Activated CD4-positive, alpha-beta T cell treated with anti-CD3 and anti-CD28 coated beads, Interleukin-2, amount 10 ng/mL, durations not matched to agents 24 days and 14 days (primary cell): ENCODE measurements at regions of chr6 and their contacts with region 1.

Region 1: DNA sequence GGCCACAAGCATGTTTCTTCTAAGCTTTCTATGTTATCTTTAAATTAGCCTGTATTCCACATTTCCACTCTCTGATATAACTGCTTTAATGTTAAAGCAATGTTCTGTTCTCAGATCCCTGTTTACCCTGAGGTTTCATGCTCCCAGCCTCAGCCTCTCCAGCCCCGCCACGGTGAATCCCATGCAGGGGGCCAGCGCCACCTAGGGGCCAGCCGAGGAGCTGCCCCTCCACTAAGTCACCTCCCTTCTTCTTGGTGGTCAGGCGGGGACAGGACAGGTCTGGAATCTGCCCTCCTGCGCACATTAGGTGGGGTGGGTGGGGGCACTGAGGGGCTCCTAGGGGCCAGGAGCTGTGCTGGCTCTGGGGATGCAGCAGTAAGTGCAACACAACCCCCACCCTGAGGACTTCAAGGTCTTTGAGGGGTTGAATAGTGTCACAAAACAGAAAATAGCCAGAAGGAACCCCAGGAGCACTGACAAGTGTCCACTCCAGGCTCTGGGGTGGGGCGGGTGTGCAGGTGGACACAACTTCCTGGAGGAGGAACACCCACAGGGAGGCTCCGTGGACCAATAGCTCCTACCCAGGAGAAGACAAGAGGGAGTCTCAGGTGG is 61.6 kb downstream of the RAB44 start:
- DNase-seq: peak; percentile 95
- H3K4me3 Mint-ChIP-seq: no peak overlapping the region
- H3K27ac Mint-ChIP-seq: peak overlapping the region; percentile 30
- H3K4me1 Mint-ChIP-seq: peaks cover 48% of the 10 kb centered on the region
- H3K27me3 Mint-ChIP-seq: no peaks in the 10 kb centered on the region

Region 2: GRCh38 chr6:36423101-36423824 is 336.0 kb before region 1 on chr6:
- intact Hi-C with region 1: loop called (anchors 1 kb)
- DNase-seq: peak; percentile 99
- H3K4me3 Mint-ChIP-seq: peak overlapping the region; percentile 88
- H3K27ac Mint-ChIP-seq: peak overlapping the region; percentile 87
- H3K4me1 Mint-ChIP-seq: peaks cover 15% of the 10 kb centered on the region
- H3K27me3 Mint-ChIP-seq: peaks cover 5% of the 10 kb centered on the region

Region 3: GRCh38 chr6:36546920-36547645 is 212.2 kb before region 1 on chr6 and contains the start of gene STK38:
- intact Hi-C with region 1: loop called (anchors 5 kb)
- DNase-seq: peak; percentile 96
- H3K4me3 Mint-ChIP-seq: peak within 1 kb of the TSS; percentile 94
- H3K27ac Mint-ChIP-seq: peak within 1 kb of the TSS; percentile 92
- H3K4me1 Mint-ChIP-seq: peaks cover 37% of the 10 kb centered on the region
- H3K27me3 Mint-ChIP-seq: no peaks in the 10 kb centered on the region
- total RNA-seq, gene STK38: 20.7 and 21.5 TPM in 2 replicates

Region 4: GRCh38 chr6:36615018-36615761 is 144.1 kb before region 1 on chr6:
- intact Hi-C with region 1: loop called (anchors 1 kb)
- DNase-seq: peak; percentile 85
- H3K4me3 Mint-ChIP-seq: no peak overlapping the region
- H3K27ac Mint-ChIP-seq: peak overlapping the region; percentile 17
- H3K4me1 Mint-ChIP-seq: peaks cover 14% of the 10 kb centered on the region
- H3K27me3 Mint-ChIP-seq: no peaks in the 10 kb centered on the region

Region 5: GRCh38 chr6:36623547-36624459 is 135.5 kb before region 1 on chr6:
- intact Hi-C with region 1: loop called (anchors 1 kb)
- DNase-seq: peak; percentile 94
- H3K4me3 Mint-ChIP-seq: no peak overlapping the region
- H3K27ac Mint-ChIP-seq: peak overlapping the region; percentile 62
- H3K4me1 Mint-ChIP-seq: peaks cover 25% of the 10 kb centered on the region
- H3K27me3 Mint-ChIP-seq: no peaks in the 10 kb centered on the region

Region 6: DNA sequence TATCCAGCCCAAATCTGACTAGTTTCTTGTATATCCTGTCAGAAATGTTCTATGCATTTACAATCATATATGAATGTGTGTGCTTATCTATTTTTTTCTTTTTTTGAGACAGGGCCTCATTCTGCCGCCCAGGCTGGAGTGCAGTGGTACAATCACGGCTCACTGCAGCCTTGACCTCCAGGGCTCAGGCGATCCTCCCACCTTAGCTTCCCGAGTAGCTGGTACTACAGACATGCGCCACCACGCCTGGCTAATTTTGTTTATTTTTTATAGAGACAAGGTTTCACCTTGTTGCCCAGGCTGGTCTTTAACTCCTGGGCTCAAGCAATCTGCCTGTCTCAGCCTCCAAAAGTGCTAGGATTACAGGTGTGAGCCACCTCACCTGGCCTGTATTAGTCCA is 64.6 kb before region 1 on chr6:
- intact Hi-C with region 1: loop called (anchors 1 kb)
- DNase-seq: no peak
- H3K4me3 Mint-ChIP-seq: no peak overlapping the region
- H3K27ac Mint-ChIP-seq: peak overlapping the region; percentile 5
- H3K4me1 Mint-ChIP-seq: peaks cover 42% of the 10 kb centered on the region
- H3K27me3 Mint-ChIP-seq: no peaks in the 10 kb centered on the region

Region 7: GRCh38 chr6:36724514-36725390 is 34.5 kb before region 1 on chr6:
- intact Hi-C with region 1: loop called (anchors 5 kb)
- DNase-seq: peak; percentile 84
- H3K4me3 Mint-ChIP-seq: no peak overlapping the region
- H3K27ac Mint-ChIP-seq: no peak overlapping the region
- H3K4me1 Mint-ChIP-seq: peaks cover 33% of the 10 kb centered on the region
- H3K27me3 Mint-ChIP-seq: peaks cover 2% of the 10 kb centered on the region